ENCODE measurements at regions of chr18 and their contacts with region 1.

Region 1: DNA sequence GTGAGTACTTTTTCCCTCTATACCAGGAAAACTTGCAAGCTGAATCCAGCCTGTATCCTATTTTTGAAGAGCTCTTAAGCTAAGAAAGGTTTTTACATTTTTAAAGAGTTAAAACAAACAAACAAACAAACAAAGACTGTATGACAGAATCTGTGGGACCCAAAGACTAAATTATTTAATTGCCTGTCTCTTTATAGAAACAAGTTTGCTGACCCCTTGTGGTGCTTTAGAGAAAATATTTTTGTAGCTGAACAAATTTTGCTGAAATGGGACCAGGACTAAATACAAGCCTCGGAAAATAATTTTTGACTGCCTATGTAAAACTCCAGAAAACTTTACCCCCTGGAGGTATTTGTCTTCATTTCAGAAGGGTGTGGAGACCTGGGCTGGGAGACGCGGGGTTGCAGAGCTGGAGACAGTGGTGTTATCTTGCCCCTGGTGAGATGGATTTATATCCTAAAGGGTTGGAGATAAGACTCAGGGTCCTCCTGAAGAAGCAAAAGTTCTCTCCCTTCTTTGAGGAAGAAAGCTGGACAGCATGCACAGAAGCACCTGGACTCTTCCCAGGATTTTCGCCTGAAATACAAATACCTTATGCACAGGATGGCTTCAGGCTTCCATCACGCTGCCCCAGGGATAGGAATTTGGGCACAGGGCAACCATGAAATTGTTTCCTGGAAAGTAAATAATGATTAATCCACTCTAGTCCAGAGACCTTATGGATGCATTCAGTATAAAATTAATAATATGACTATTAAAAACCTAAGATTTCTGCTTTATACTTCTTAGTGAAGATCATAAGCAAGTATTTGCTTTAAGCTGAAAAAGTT is 54.3 kb downstream of the TMX3 start:
- DNase-seq: peak; percentile 14
- H3K4me3 ChIP-seq: no peak overlapping the region
- H3K27ac ChIP-seq: no peak overlapping the region
- H3K4me1 ChIP-seq: no peaks in the 10 kb centered on the region
- H3K27me3 ChIP-seq: no peaks in the 10 kb centered on the region
- CTCF ChIP-seq: peak; percentile 75
- EP300 ChIP-seq: no peak
- RAD21 ChIP-seq: peak; percentile 75

Region 2: GRCh38 chr18:67217551-67218166 is 1442.9 kb before region 1 on chr18:
- CTCF ChIA-PET with region 1: interaction called, 23 read pairs
- POLR2A ChIA-PET with region 1: no interaction called
- DNase-seq: peak; percentile 58
- H3K4me3 ChIP-seq: no peak overlapping the region
- H3K27ac ChIP-seq: no peak overlapping the region
- H3K4me1 ChIP-seq: no peaks in the 10 kb centered on the region; a peak in 1 of 4 replicates
- H3K27me3 ChIP-seq: no peaks in the 10 kb centered on the region
- CTCF ChIP-seq: peak; percentile 82
- EP300 ChIP-seq: no peak
- RAD21 ChIP-seq: peak; percentile 99

Region 3: DNA sequence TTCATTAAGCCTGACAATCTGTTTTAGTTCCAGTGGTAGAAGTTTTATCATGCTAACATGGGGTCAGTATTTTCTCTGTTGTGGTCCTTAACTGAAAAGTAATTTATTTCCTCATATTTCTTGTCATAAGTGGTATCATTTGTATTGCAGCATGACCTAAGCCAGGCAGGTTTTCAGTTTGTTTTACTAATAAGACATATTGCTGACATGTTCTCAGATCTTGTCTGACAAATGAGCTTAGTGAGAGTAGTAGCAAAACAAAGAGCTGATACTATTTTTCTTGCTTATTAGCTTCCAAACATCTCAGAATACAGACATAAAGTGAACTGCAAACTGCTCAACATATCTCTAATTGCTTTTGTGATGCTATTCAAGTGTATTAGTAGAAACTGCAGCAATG is 1437.7 kb before region 1 on chr18:
- CTCF ChIA-PET with region 1: interaction called, 23 read pairs
- POLR2A ChIA-PET with region 1: no interaction called
- DNase-seq: no peak
- H3K4me3 ChIP-seq: no peak overlapping the region
- H3K27ac ChIP-seq: no peak overlapping the region
- H3K4me1 ChIP-seq: no peaks in the 10 kb centered on the region
- H3K27me3 ChIP-seq: no peaks in the 10 kb centered on the region
- CTCF ChIP-seq: no peak
- EP300 ChIP-seq: no peak
- RAD21 ChIP-seq: no peak

Region 4: GRCh38 chr18:67515945-67516538 is 1144.5 kb before region 1 on chr18:
- CTCF ChIA-PET with region 1: interaction called, 51 read pairs
- POLR2A ChIA-PET with region 1: no interaction called
- DNase-seq: peak; percentile 78
- H3K4me3 ChIP-seq: peak overlapping the region; percentile 84 to 95
- H3K27ac ChIP-seq: peak overlapping the region; percentile 71 to 81
- H3K4me1 ChIP-seq: peaks cover 17 to 22% of the 10 kb centered on the region in 2 experiments; a peak in 3 of 4 replicates
- H3K27me3 ChIP-seq: no peaks in the 10 kb centered on the region
- CTCF ChIP-seq: peak; percentile 80
- EP300 ChIP-seq: no peak
- RAD21 ChIP-seq: peak; percentile 91

Region 5: DNA sequence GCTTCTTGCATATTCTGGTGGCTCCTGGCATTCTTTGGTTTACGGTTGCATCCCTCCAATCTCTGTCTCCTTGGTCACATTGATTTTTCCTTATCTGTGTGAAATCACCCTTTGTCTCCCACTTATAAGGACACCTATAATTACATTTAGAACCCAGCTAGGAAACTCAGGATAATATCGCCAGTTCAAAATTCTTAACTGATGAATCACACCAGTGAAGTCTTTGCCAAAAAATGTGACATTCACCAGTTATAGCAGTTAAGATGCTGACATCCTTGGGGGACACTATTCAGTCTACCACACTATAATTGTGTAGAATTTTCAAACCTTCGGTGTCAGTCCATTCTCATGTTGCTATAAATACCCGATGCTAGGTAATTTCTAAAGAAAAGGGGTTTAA is 265.9 kb before region 1 on chr18:
- CTCF ChIA-PET with region 1: no interaction called
- POLR2A ChIA-PET with region 1: no interaction called
- DNase-seq: no peak
- H3K4me3 ChIP-seq: no peak overlapping the region
- H3K27ac ChIP-seq: no peak overlapping the region
- H3K4me1 ChIP-seq: no peaks in the 10 kb centered on the region
- H3K27me3 ChIP-seq: no peaks in the 10 kb centered on the region
- CTCF ChIP-seq: no peak
- EP300 ChIP-seq: peak in 1 of 2 experiments; percentile 60; a peak in 2 of 4 replicates
- RAD21 ChIP-seq: no peak

Region 6: DNA sequence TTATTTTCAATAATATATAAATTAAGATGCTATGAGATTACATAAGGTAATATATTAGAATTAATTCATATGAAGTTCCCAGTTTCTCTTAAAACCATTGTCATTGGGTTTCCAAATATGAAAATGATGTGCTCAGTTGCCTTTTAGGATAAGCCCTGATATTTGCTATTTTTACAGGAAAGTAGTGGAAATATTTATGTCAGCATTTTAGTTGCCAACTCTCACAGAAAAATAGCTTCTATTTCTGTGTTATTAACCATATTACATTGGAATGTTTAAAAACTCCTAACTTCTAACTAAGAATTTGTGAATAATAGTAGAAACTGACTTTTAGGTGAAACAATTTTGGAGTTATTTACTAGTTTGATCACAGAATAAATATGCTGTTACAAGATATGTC is 19.7 kb before region 1 on chr18:
- CTCF ChIA-PET with region 1: interaction called, 10 read pairs
- POLR2A ChIA-PET with region 1: no interaction called
- DNase-seq: no peak
- H3K4me3 ChIP-seq: no peak overlapping the region
- H3K27ac ChIP-seq: no peak overlapping the region
- H3K4me1 ChIP-seq: no peaks in the 10 kb centered on the region
- H3K27me3 ChIP-seq: no peaks in the 10 kb centered on the region
- CTCF ChIP-seq: no peak
- EP300 ChIP-seq: no peak
- RAD21 ChIP-seq: no peak

Region 7: GRCh38 chr18:68648191-68648590 is 12.4 kb before region 1 on chr18:
- CTCF ChIA-PET with region 1: interaction called, 34 read pairs
- POLR2A ChIA-PET with region 1: no interaction called
- DNase-seq: no peak
- H3K4me3 ChIP-seq: no peak overlapping the region
- H3K27ac ChIP-seq: no peak overlapping the region
- H3K4me1 ChIP-seq: no peaks in the 10 kb centered on the region
- H3K27me3 ChIP-seq: no peaks in the 10 kb centered on the region
- CTCF ChIP-seq: no peak
- EP300 ChIP-seq: no peak
- RAD21 ChIP-seq: no peak

Region 8: DNA sequence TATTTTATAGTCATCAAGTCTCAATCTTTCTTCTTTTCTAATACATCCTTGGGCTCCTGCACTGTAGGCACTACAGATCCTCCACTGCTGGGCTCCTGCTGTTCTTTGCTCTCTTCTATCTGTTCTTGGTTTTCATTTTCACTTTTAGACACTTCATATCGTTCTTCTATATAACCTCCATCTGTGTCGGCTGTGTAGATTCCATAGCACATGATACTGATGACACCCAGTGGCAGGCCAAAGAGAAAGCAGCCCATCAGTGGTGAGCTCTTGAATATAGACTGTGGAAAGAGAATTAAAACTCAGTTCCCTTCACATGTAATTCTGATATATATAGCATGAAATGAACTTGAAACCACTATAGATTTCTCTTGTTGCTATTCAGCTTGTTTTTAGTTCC is 16.3 kb after region 1 on chr18:
- CTCF ChIA-PET with region 1: interaction called, 11 read pairs
- POLR2A ChIA-PET with region 1: no interaction called
- DNase-seq: no peak
- H3K4me3 ChIP-seq: no peak overlapping the region
- H3K27ac ChIP-seq: no peak overlapping the region
- H3K4me1 ChIP-seq: no peaks in the 10 kb centered on the region
- H3K27me3 ChIP-seq: no peaks in the 10 kb centered on the region
- CTCF ChIP-seq: peak; percentile 35
- EP300 ChIP-seq: no peak
- RAD21 ChIP-seq: peak; percentile 36; the same call in 1 of the 2 replicates

Region 9: DNA sequence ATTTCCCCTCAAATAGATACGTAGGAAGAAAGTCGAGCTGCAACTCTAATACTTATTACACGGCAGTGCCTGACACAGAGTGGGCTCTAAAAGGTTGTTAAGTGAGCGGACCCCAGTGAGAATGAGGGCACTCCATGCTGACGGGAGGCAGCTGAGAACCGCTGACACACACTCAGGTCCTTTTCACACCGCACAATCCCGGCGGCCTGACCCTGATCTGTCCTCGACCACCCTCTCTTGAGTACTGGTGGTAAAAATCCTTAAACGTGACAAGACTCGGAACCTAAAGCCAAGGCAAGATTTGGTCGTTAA is 53.7 kb after region 1 on chr18:
- CTCF ChIA-PET with region 1: no interaction called
- POLR2A ChIA-PET with region 1: no interaction called
- DNase-seq: peak; percentile 56
- H3K4me3 ChIP-seq: peak overlapping the region; percentile 81 to 96
- H3K27ac ChIP-seq: peak overlapping the region; percentile 76 to 80
- H3K4me1 ChIP-seq: peaks cover 4 to 8% of the 10 kb centered on the region in 2 experiments; a peak in 2 of 4 replicates
- H3K27me3 ChIP-seq: no peaks in the 10 kb centered on the region
- CTCF ChIP-seq: no peak
- EP300 ChIP-seq: no peak
- RAD21 ChIP-seq: no peak